Aorta (tissue), 5 donors: ENCODE measurements at regions of chr3 and their contacts with region 1.

Region 1: GRCh38 chr3:100254168-100254777 is 6.5 kb upstream of the TBC1D23 start:
- DNase-seq: peak in 1 of 2 donors; percentile 62
- ATAC-seq: peak; percentile 87
- H3K4me3 ChIP-seq: no peak overlapping the region
- H3K27ac ChIP-seq: no peak overlapping the region
- H3K4me1 ChIP-seq: no peaks in the 10 kb centered on the region
- H3K27me3 ChIP-seq: no peaks in the 10 kb centered on the region

Region 2: DNA sequence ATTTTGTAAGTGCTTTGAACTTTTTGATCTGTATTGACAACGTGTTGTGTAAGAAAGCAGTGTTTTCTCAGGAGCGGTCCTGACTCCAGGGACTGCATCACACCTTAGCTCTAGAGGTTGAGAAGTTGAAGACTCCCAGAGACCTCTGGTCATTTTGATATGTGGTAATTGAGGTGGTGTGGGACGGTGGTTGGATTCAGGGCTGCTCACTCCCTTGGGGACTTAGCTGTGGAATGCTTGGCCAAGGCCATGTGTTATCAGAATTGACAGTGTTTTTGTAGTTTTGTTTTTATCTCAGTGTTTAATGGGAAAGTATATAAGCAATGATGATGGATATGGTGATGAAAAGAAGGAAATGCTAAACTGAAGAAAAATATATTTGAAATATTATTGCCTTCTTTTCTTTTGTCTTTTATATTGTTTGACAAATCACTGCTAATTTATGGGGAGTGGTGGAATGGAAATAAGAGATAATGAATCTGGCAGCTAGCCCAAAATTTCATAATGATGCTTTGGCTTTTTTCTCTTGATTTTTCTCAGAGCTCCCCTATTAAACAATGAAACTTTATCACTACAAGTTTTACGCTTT is 420.6 kb before region 1 on chr3:
- intact Hi-C with region 1: loop called (anchors 5 kb)
- DNase-seq: no peak
- ATAC-seq: no peak
- H3K4me3 ChIP-seq: no peak overlapping the region
- H3K27ac ChIP-seq: peak overlapping the region; percentile 36 to 55
- H3K4me1 ChIP-seq: peaks cover 0 to 2% of the 10 kb centered on the region in 2 donors
- H3K27me3 ChIP-seq: no peaks in the 10 kb centered on the region

Region 3: GRCh38 chr3:99842826-99843589 is 411.3 kb before region 1 on chr3:
- intact Hi-C with region 1: loop called in 1 of 2 experiments (anchors 5 kb)
- DNase-seq: no peak
- ATAC-seq: peak; percentile 70
- H3K4me3 ChIP-seq: no peak overlapping the region
- H3K27ac ChIP-seq: peak overlapping the region; percentile 63 to 91
- H3K4me1 ChIP-seq: peaks cover 2 to 3% of the 10 kb centered on the region in 2 donors
- H3K27me3 ChIP-seq: no peaks in the 10 kb centered on the region

Region 4: GRCh38 chr3:99945328-99945995 is 308.8 kb before region 1 on chr3:
- intact Hi-C with region 1: loop called in 1 of 2 experiments (anchors 10 kb)
- DNase-seq: peak in 1 of 2 donors; percentile 53
- ATAC-seq: peak; percentile 37
- H3K4me3 ChIP-seq: no peak overlapping the region
- H3K27ac ChIP-seq: peak overlapping the region; percentile 90 to 98
- H3K4me1 ChIP-seq: peaks cover 2 to 5% of the 10 kb centered on the region in 2 donors
- H3K27me3 ChIP-seq: no peaks in the 10 kb centered on the region

Region 5: GRCh38 chr3:99965077-99965476 is 289.2 kb before region 1 on chr3:
- intact Hi-C with region 1: loop called in 1 of 2 experiments (anchors 10 kb)
- DNase-seq: no peak
- ATAC-seq: no peak
- H3K4me3 ChIP-seq: no peak overlapping the region
- H3K27ac ChIP-seq: peak overlapping the region in 1 of 2 donors; percentile 98
- H3K4me1 ChIP-seq: peaks cover 7 to 8% of the 10 kb centered on the region in 2 donors
- H3K27me3 ChIP-seq: no peaks in the 10 kb centered on the region

Region 6: DNA sequence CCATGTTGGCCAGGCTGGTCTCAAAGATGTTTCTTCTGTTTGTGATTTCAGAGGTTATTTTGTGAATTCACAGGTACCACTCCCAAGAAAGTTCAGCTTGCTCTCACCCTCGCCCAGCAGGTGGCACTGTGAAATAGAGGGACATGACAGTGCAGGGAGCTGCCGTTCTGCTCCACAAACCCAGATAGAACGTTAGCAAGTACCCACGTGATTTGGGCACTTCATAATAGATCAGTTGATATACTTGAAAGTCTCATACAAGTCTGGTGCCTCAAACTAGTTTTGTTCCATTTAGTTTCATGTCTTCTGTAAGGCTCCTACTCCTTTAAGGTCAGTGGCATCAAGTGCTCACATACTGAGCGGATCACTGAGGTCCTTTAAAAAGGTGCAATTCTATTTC is 185.4 kb before region 1 on chr3:
- intact Hi-C with region 1: loop called (anchors 1 to 2 kb)
- DNase-seq: peak; percentile 90 to 93
- ATAC-seq: peak; percentile 91
- H3K4me3 ChIP-seq: no peak overlapping the region
- H3K27ac ChIP-seq: peak overlapping the region; percentile 97 to 99
- H3K4me1 ChIP-seq: peaks cover 2 to 4% of the 10 kb centered on the region in 2 donors
- H3K27me3 ChIP-seq: no peaks in the 10 kb centered on the region

Region 7: GRCh38 chr3:100169201-100169920 is 84.9 kb before region 1 on chr3:
- intact Hi-C with region 1: loop called (anchors 5 kb)
- DNase-seq: no peak
- ATAC-seq: no peak
- H3K4me3 ChIP-seq: no peak overlapping the region
- H3K27ac ChIP-seq: peak overlapping the region in 1 of 2 donors; percentile 36
- H3K4me1 ChIP-seq: peaks cover 0 to 5% of the 10 kb centered on the region in 2 donors
- H3K27me3 ChIP-seq: no peaks in the 10 kb centered on the region

Region 8: DNA sequence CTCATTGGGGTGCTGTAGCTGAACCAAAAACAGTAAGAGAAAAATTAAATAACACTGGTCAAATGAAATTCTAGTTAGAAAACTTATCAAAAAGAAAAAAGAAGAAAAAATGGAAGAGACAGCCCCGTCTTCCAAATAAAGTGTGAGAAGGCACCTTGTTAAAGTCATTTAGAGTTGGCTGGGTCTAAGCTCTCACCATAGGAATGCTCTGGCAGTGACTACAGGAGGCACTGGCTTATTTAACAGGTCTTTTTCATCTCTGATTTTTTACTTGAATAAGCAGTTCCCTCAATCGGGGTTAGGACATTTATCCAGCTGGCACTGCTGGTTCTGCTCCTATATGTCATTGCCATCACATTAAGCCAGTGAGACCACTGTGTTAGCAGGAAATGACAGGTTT is 740.5 kb after region 1 on chr3:
- intact Hi-C with region 1: no loop called
- DNase-seq: no peak
- ATAC-seq: no peak
- H3K4me3 ChIP-seq: no peak overlapping the region
- H3K27ac ChIP-seq: no peak overlapping the region
- H3K4me1 ChIP-seq: no peaks in the 10 kb centered on the region
- H3K27me3 ChIP-seq: no peaks in the 10 kb centered on the region